Activated naive CD4-positive, alpha-beta T cell treated with anti-CD3 and anti-CD28 coated beads for 36 hours (primary cell): ENCODE measurements at regions of chr14 and their contacts with region 1.

Region 1: GRCh38 chr14:61178226-61179060 is 102.7 kb downstream of the TMEM30B start:
- DNase-seq: peak; percentile 78
- H3K4me3 Mint-ChIP-seq: peak overlapping the region; percentile 41
- H3K27ac Mint-ChIP-seq: peak overlapping the region; percentile 94
- H3K4me1 Mint-ChIP-seq: peaks cover 57% of the 10 kb centered on the region
- H3K27me3 Mint-ChIP-seq: peaks cover 6% of the 10 kb centered on the region

Region 2: DNA sequence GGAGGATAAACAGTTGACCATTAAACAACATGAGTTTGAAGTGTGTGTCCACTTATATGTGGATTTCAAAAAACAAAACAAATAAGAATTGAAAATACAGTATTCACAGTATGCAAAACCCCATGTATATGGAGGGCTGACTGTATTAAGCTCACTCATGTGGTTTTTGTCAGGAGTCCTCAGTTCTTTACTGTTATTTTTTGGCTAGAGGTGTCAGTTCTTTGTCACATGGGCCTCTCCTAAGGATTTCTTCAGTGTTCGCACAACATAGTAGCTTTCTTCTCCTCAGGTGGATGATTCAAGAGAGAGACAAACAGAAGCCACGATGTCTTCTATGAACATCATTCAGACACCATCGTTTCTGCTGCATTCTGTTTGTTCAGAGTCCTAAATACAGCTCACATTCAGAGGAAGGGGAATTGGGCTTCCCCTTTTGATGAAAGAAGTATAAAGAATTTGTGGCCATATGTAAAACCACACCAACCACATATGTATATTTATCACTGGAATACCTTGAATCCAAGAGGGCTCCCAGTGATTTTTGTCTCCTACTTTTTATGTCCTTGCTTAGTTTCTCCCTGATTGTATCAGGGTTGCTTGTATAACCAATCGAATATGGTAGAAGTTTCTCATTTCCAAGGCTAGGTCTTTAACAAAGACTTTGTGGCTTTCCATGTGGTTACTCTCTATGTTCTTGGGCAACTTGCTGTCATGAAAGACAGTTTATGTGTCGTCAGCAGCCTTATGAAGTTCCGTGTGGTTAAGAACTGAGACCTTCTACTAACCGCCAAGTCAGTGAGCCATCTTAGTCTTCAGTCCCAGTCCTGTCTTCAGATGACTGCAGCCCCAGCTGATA is 425.0 kb before region 1 on chr14:
- CTCF ChIA-PET with region 1: no interaction called
- intact Hi-C with region 1: loop called (anchors 1 kb)
- DNase-seq: peak; percentile 78
- H3K4me3 Mint-ChIP-seq: peak overlapping the region; percentile 14
- H3K27ac Mint-ChIP-seq: peak overlapping the region; percentile 37
- H3K4me1 Mint-ChIP-seq: peaks cover 35% of the 10 kb centered on the region
- H3K27me3 Mint-ChIP-seq: peaks cover 2% of the 10 kb centered on the region

Region 3: DNA sequence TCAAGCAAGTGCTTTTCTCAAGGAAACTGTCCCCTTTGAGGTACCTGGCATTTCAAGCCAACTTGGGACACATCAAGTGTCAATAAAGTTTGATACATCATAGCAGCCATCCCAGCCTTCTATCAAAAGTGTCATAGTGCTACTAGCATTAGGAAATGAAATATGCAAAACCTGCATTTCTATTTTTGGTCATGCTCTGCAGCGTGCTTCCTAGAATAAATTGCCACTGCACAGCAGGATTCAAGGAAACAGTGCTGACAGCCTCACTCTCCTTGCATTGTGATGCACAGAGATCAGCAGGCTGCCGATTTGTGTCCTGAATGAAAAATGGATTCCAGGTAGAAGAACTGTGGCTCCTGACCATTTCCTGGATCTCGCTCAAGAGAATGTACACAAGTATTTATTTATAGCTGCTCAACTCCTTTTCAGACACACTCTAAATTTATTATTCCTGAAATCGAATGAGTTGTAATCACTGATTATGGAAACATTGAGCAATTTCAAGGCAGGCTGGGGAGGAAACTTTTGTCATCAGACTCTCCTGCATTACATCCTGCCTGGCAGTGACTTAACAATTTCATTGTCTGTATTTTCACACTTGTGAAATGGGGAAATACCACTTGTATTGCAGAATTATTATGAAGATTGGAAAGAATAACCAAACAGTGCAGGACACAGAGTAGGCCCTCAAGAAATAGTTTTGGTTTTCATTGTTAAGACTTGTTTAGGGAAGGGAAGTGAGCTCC is 76.5 kb before region 1 on chr14:
- CTCF ChIA-PET with region 1: no interaction called
- intact Hi-C with region 1: loop called (anchors 1 kb)
- DNase-seq: peak; percentile 34
- H3K4me3 Mint-ChIP-seq: no peak overlapping the region
- H3K27ac Mint-ChIP-seq: peak overlapping the region; percentile 58
- H3K4me1 Mint-ChIP-seq: peaks cover 31% of the 10 kb centered on the region
- H3K27me3 Mint-ChIP-seq: no peaks in the 10 kb centered on the region

Region 4: DNA sequence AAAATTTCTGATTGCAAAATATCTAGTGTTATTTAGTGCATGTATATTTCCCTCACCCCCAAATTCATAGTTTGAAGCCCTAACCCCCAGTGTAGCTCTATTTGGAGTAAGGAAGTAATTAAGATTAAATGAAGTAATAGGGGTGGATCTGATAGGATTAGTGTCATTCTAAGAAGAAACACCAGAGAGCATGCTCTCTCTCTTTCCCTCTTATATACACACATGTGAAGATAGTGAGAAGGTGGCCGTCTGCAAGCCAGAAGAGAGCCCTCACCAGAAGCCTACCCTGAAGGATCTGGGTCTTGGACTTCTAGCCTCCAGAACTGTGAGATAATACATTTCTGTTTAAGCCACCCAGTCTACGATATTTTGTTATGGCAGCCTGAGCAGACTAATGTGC is 17.6 kb before region 1 on chr14:
- CTCF ChIA-PET with region 1: no interaction called
- intact Hi-C with region 1: no loop called
- DNase-seq: no peak
- H3K4me3 Mint-ChIP-seq: no peak overlapping the region
- H3K27ac Mint-ChIP-seq: no peak overlapping the region
- H3K4me1 Mint-ChIP-seq: no peaks in the 10 kb centered on the region
- H3K27me3 Mint-ChIP-seq: peaks cover 5% of the 10 kb centered on the region

Region 5: DNA sequence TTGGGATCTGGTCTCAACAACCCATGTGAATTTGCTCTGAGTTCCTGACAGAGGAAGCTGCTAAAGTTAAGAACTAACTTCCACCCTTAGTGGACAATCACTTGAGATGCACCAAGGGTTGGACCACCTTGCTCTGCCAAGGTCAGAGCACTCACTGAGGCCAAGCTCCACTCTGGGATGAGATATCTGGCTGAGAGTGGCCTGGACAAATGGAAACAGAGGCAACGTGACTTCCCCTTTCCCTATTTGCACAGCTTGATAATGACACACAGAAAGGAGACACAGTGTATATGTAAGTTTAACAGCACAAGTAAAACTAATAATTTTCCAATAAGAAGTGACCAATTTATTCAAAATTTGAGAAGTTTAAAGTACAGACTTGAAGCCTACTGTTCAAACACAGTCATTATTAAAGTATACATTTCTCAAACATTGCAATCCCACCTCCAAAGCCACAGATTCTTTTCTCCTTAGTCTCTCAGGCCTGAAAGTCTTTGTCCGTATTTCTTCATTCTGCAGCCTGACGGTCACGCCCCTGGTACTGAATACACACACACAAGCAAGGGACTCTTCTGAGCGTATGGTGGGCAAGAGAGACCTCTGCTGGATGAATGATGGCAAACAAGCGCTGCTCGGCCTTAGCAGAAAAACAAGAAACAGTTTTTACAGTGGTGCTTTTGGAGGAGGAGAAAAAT is 74.1 kb after region 1 on chr14:
- CTCF ChIA-PET with region 1: interaction called, 8 read pairs
- intact Hi-C with region 1: loop called (anchors 5 kb)
- DNase-seq: peak; percentile 83
- H3K4me3 Mint-ChIP-seq: no peak overlapping the region
- H3K27ac Mint-ChIP-seq: no peak overlapping the region
- H3K4me1 Mint-ChIP-seq: no peaks in the 10 kb centered on the region
- H3K27me3 Mint-ChIP-seq: peaks cover 7% of the 10 kb centered on the region

Region 6: GRCh38 chr14:61322441-61323290 is 144.2 kb after region 1 on chr14:
- CTCF ChIA-PET with region 1: no interaction called
- intact Hi-C with region 1: no loop called
- DNase-seq: peak; percentile 57
- H3K4me3 Mint-ChIP-seq: peak overlapping the region; percentile 99
- H3K27ac Mint-ChIP-seq: peak overlapping the region; percentile 95
- H3K4me1 Mint-ChIP-seq: peaks cover 36% of the 10 kb centered on the region
- H3K27me3 Mint-ChIP-seq: no peaks in the 10 kb centered on the region

Region 7: GRCh38 chr14:61503167-61503801 is 324.8 kb after region 1 on chr14:
- CTCF ChIA-PET with region 1: no interaction called
- intact Hi-C with region 1: loop called (anchors 5 kb)
- DNase-seq: peak; percentile 92
- H3K4me3 Mint-ChIP-seq: peak overlapping the region; percentile 66
- H3K27ac Mint-ChIP-seq: peak overlapping the region; percentile 100
- H3K4me1 Mint-ChIP-seq: peaks cover 97% of the 10 kb centered on the region
- H3K27me3 Mint-ChIP-seq: no peaks in the 10 kb centered on the region

Region 8: GRCh38 chr14:62126879-62127478 is 948.5 kb after region 1 on chr14:
- CTCF ChIA-PET with region 1: no interaction called
- intact Hi-C with region 1: no loop called
- DNase-seq: peak; percentile 5
- H3K4me3 Mint-ChIP-seq: no peak overlapping the region
- H3K27ac Mint-ChIP-seq: no peak overlapping the region
- H3K4me1 Mint-ChIP-seq: no peaks in the 10 kb centered on the region
- H3K27me3 Mint-ChIP-seq: peaks cover 29% of the 10 kb centered on the region